ENCODE measurements at regions of chr9 and their contacts with region 1.

Region 1: GRCh38 chr9:71487061-71487460 is 281.3 kb downstream of the CEMIP2 start:
- DNase-seq: no peak
- ATAC-seq: peak; percentile 80

Region 2: GRCh38 chr9:70031141-70031545 is 1455.9 kb before region 1 on chr9:
- intact Hi-C with region 1: loop called (anchors 5 kb)
- DNase-seq: no peak
- ATAC-seq: peak; percentile 54

Region 3: DNA sequence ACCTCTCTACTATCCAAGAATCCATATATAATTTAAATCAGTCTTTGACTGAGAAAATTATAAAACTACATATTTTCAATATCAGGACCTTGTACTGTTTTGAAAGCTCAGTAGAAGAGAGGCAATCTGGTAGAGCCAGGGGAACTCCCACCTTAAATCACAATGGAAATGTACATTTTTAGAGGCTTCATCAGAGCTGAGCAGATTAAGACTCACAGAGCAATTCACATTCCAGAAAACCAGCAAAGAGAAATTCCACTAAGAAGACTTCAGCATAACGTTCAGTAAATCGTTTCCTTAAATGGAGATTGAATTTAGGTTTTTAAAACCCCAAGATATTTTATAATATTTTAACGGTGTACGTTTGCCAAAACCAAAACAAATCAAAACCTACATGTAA is 137.8 kb before region 1 on chr9:
- intact Hi-C with region 1: no loop called
- DNase-seq: no peak
- ATAC-seq: no peak